GM10248 (cell line): ENCODE measurements at regions of chr17 and their contacts with region 1.

Region 1: DNA sequence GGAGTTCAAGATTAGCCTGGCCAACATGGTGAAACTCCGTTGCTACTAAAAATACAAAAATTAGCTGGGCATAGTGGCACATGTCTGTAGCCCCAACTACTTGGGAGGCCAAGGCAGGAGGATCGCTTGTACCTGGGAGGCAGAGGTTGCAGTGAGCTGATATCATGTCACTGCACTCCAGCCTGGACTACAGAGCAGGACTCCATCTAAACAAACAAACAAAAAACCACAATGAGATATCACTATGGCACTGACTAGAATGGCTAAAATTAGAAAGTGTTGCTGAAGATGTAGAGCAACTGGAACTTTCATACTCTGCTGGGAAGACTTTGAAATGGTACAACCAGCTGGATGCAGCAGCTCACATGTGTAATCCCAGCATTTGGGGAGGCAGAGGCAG is 6.5 kb upstream of the TNK1 start:
- DNase-seq: no peak
- CTCF ChIP-seq: no peak

Region 2: DNA sequence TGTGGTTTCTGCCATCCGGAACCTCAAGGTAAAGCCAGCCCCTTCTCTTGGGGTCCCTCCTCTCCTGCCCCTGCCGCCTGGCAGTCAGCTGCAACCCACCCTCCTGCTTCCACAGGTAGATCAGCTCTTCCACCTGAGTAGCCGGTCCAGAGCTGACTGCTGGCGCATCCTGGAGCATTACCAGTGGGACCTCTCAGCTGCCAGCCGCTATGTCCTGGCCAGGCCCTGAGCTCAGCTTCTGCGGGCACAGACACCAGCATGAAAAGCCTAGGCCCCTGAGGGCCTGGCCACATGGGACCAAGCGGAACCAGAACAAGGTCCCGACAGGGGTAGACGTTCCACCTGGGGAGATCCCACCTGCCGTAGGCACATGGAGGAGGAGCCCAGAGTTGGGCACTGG is 14.5 kb after region 1 on chr17:
- CTCF ChIA-PET with region 1: interaction called, 10 read pairs
- POLR2A ChIA-PET with region 1: no interaction called
- DNase-seq: no peak
- CTCF ChIP-seq: no peak

Region 3: DNA sequence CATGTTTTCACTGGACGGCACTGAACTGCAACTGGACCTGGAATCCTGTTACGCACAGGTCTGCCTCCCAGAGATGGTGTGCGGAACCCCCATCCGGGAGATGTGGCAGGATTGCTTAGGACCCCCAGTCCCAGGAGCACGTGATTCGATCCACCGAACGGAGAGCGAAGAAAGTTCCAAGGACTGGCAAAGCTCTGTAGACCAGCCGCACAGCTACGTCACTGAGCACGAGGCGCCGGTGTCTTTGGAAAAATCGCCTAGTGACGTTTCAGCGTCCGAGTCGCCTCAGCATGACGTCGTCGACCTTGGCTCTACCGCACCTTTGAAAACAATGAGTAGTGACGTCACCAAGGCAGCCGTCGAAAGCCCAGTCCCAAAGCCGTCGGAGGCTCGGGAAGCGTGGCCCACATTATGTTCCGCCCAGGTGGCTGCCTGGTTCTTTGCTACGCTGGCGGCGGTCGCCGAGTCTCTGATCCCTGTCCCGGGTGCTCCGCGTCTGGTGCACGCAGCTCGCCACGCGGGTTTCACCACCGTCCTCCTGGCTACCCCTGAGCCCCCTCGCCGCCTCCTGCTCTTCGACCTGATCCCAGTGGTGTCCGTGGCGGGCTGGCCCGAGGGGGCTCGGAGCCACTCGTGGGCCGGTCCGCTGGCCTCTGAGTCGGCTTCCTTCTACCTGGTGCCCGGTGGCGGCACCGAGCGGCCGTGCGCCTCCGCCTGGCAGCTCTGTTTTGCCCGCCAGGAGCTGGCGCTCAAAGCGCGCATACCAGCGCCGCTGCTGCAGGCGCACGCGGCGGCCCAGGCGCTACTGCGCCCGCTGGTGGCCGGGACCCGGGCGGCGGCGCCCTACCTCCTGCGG is 62.2 kb after region 1 on chr17:
- CTCF ChIA-PET with region 1: no interaction called
- POLR2A ChIA-PET with region 1: no interaction called
- DNase-seq: peak; percentile 71
- CTCF ChIP-seq: peak; percentile 92